MCF 10A (cell line): ENCODE measurements at regions of chr13 and their contacts with region 1.

Region 1: GRCh38 chr13:98842864-98843481 is 90.5 kb upstream of the SLC15A1 start:
- DNase-seq: peak; percentile 67
- H3K4me3 Mint-ChIP-seq: no peak overlapping the region
- H3K27ac Mint-ChIP-seq: no peak overlapping the region
- H3K4me1 Mint-ChIP-seq: no peaks in the 10 kb centered on the region
- H3K27me3 Mint-ChIP-seq: no peaks in the 10 kb centered on the region
- CTCF ChIP-seq: peak; percentile 83

Region 2: GRCh38 chr13:98821372-98822224 is 21.4 kb before region 1 on chr13:
- CTCF ChIA-PET with region 1: interaction called, 12 read pairs
- POLR2A ChIA-PET with region 1: no interaction called
- intact Hi-C with region 1: no loop called
- DNase-seq: no peak
- H3K4me3 Mint-ChIP-seq: no peak overlapping the region
- H3K27ac Mint-ChIP-seq: no peak overlapping the region
- H3K4me1 Mint-ChIP-seq: no peaks in the 10 kb centered on the region
- H3K27me3 Mint-ChIP-seq: no peaks in the 10 kb centered on the region
- CTCF ChIP-seq: no peak

Region 3: DNA sequence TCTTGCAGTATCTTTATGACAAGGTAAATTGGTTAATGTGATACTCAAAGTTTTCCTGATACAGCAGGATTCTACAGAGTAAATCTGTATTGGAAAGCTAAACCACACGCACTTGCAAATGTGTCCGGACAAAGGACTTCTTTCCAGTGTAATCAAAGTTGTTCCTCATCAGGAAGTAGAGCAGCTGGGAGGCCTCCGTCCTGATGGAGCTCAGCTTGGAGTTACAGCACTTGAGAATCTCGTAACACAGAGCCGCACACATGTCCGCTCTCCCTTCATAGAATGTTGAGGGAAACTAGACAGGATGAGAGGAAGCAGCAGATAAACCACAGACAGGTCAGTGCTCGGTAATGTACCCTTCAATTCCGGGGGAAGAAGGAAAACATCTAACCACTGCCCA is 11.7 kb before region 1 on chr13:
- CTCF ChIA-PET with region 1: interaction called, 19 read pairs
- POLR2A ChIA-PET with region 1: interaction called, 4 read pairs
- intact Hi-C with region 1: no loop called
- DNase-seq: no peak
- H3K4me3 Mint-ChIP-seq: no peak overlapping the region
- H3K27ac Mint-ChIP-seq: no peak overlapping the region
- H3K4me1 Mint-ChIP-seq: peaks cover 9% of the 10 kb centered on the region
- H3K27me3 Mint-ChIP-seq: no peaks in the 10 kb centered on the region
- CTCF ChIP-seq: no peak